Common myeloid progenitor, CD34-positive (primary cell): ENCODE measurements at regions of chr14 and their contacts with region 1.

Region 1: GRCh38 chr14:100645192-100645990 is 58.2 kb upstream of the BEGAIN start:
- DNase-seq: peak; percentile 89 to 96 (median 96)
- H3K4me3 ChIP-seq: peak overlapping the region in 4 of 7 experiments; percentile 20 to 43 (median 35)
- H3K27ac ChIP-seq: no peak overlapping the region
- H3K4me1 ChIP-seq: peaks cover 8 to 54% (median 37%) of the 10 kb centered on the region in 4 experiments
- H3K27me3 ChIP-seq: no peaks in the 10 kb centered on the region

Region 2: GRCh38 chr14:100383727-100384158 is 261.6 kb before region 1 on chr14:
- CTCF ChIA-PET with region 1: interaction called, 119 read pairs
- POLR2A ChIA-PET with region 1: no interaction called
- DNase-seq: peak; percentile 49 to 72 (median 66)
- H3K4me3 ChIP-seq: no peak overlapping the region
- H3K27ac ChIP-seq: no peak overlapping the region
- H3K4me1 ChIP-seq: peaks cover 0 to 3% (median 0%) of the 10 kb centered on the region in 4 experiments
- H3K27me3 ChIP-seq: no peaks in the 10 kb centered on the region

Region 3: GRCh38 chr14:100406505-100407131 is 238.8 kb before region 1 on chr14:
- CTCF ChIA-PET with region 1: no interaction called
- POLR2A ChIA-PET with region 1: no interaction called
- DNase-seq: peak in 2 of 3 donors; percentile 39 to 58
- H3K4me3 ChIP-seq: no peak overlapping the region
- H3K27ac ChIP-seq: no peak overlapping the region
- H3K4me1 ChIP-seq: peaks cover 6 to 23% (median 20%) of the 10 kb centered on the region in 4 experiments
- H3K27me3 ChIP-seq: peaks cover 0 to 2% (median 0%) of the 10 kb centered on the region in 5 experiments

Region 4: DNA sequence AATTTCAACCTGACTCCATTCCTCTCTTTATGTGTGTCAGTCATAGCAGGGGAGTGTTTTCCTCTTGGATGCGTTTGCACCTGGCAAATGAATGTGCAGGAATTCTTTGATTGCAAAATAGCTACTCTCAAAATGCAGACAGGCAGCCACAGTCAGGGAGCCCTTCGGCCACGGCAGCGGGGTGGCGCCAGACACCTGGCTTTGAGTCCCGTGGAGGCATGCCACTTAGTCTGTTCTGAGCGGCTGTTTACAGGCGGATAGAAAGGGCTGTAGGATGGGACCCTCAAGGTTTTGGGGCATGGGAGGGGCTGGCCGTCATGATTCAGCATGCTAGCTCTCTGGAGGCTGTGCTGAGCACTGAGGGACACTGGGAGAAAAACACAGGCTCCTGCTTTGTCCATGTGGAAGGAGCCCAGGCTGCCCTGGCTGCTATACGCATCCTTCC is 205.2 kb before region 1 on chr14:
- CTCF ChIA-PET with region 1: interaction called, 53 read pairs
- POLR2A ChIA-PET with region 1: no interaction called
- DNase-seq: peak; percentile 23 to 79 (median 74)
- H3K4me3 ChIP-seq: no peak overlapping the region
- H3K27ac ChIP-seq: no peak overlapping the region
- H3K4me1 ChIP-seq: peaks cover 0 to 30% (median 14%) of the 10 kb centered on the region in 4 experiments
- H3K27me3 ChIP-seq: no peaks in the 10 kb centered on the region

Region 5: DNA sequence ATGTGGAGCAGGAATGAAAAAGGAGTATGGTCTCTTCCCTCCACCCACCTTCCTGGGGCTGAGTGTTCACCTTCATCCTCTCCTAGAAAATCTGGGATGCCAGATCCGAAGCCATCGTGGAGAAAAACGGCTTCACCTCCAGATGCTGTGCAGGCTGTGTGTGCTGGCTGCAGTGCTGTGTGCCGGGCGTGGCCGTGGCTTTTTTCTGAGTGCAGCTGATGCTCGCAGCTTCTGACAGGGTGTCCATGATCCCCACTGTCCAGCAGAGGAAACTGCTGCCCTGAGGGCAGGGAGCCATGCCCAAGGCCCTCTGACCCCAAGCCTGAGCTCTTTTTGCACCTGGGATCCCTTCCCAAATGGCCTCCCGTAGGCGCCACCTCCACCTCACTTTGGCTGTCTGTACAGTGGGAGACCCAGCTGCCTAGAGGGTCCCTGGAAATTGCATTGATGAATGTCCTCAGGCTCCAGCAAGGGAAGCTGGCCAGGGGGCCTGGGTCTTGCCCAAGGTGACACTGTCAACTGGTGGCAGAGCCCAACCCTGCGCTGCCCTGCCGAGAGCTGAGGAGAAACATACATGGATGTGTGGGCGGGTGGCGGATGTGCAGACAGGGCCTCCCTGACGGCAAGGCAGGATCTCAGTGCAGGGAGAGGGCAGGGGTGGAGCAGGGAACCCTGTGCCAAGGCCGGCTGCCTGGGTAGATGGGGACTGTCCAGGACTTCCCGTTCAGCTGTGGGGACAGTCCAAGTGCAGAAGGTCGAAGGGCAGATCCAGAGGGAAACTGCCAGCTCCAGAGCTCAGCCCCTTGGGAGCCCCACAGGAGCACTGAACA is 111.5 kb before region 1 on chr14:
- CTCF ChIA-PET with region 1: interaction called, 25 read pairs
- POLR2A ChIA-PET with region 1: no interaction called
- DNase-seq: no peak
- H3K4me3 ChIP-seq: peak overlapping the region in 2 of 7 experiments; percentile 11
- H3K27ac ChIP-seq: no peak overlapping the region
- H3K4me1 ChIP-seq: peaks cover 3 to 46% (median 35%) of the 10 kb centered on the region in 4 experiments
- H3K27me3 ChIP-seq: no peaks in the 10 kb centered on the region

Region 6: GRCh38 chr14:100581228-100582145 is 63.9 kb before region 1 on chr14:
- CTCF ChIA-PET with region 1: no interaction called
- POLR2A ChIA-PET with region 1: no interaction called
- DNase-seq: no peak
- H3K4me3 ChIP-seq: no peak overlapping the region
- H3K27ac ChIP-seq: no peak overlapping the region
- H3K4me1 ChIP-seq: peaks cover 0 to 5% (median 3%) of the 10 kb centered on the region in 4 experiments
- H3K27me3 ChIP-seq: peaks cover 0 to 12% (median 12%) of the 10 kb centered on the region in 5 experiments

Region 7: GRCh38 chr14:100617410-100618317 is 27.7 kb before region 1 on chr14:
- CTCF ChIA-PET with region 1: interaction called, 21 read pairs
- POLR2A ChIA-PET with region 1: no interaction called
- DNase-seq: peak in 1 of 3 donors; percentile 65
- H3K4me3 ChIP-seq: no peak overlapping the region
- H3K27ac ChIP-seq: no peak overlapping the region
- H3K4me1 ChIP-seq: peaks cover 10 to 48% (median 34%) of the 10 kb centered on the region in 4 experiments
- H3K27me3 ChIP-seq: no peaks in the 10 kb centered on the region

Region 8: GRCh38 chr14:100662879-100663760 is 17.7 kb after region 1 on chr14:
- CTCF ChIA-PET with region 1: interaction called, 10 read pairs
- POLR2A ChIA-PET with region 1: no interaction called
- DNase-seq: peak; percentile 66 to 89 (median 88)
- H3K4me3 ChIP-seq: no peak overlapping the region
- H3K27ac ChIP-seq: no peak overlapping the region
- H3K4me1 ChIP-seq: peaks cover 0 to 18% (median 12%) of the 10 kb centered on the region in 4 experiments
- H3K27me3 ChIP-seq: no peaks in the 10 kb centered on the region

Region 9: DNA sequence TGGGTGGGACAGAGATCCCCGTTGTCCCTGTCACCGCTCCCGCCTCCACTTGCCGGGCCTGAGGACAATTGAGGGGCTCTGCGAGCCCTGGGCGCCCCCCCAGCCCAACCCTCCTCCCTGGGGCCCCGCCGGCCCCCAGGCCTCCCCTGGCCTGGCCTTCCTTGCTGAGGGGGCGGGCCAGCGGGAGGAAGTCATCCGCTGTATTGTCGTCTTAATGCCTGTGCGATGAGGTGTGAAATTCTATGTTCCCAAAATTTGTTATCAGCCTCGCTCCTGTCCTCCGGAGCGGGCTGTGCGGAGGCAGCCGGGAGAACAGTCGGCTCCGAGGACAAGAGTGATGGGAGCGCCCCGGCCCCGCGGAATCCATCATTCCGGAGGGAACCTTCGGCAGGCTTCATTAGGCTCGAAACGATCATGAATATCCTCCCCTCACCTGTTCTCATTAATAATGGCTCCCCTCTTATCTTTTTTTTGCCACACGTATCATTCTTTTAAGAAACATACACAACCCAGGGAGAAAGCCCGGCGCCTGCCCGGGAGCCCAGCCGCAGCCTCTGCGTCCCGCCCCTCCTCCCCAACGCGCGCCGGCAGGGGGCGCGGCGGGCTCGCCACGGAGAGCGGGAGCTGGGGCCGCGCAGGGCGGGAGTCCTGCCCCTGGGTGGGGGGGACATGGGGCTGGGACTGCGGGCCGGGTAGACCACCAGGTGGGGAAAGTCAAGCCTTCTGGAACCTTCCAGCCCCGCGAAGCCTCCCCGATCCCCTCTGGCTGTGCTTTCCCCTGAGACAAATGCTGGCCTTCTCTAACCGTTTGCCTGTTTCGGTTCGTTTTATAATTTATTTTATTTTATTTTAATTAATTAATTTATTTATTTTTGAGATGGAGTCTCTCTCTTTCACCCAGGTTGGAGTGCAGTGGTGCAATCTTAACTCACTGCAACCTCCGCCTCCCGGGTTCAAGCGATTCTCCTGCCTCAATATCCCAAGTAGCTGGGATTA is 64.2 kb after region 1 on chr14:
- CTCF ChIA-PET with region 1: no interaction called
- POLR2A ChIA-PET with region 1: no interaction called
- DNase-seq: peak; percentile 42 to 59 (median 48)
- H3K4me3 ChIP-seq: peak overlapping the region in 3 of 7 experiments; percentile 8 to 57 (median 26)
- H3K27ac ChIP-seq: no peak overlapping the region
- H3K4me1 ChIP-seq: peaks cover 2 to 64% (median 50%) of the 10 kb centered on the region in 4 experiments
- H3K27me3 ChIP-seq: no peaks in the 10 kb centered on the region